PC-9 (cell line): ENCODE measurements at regions of chrX and their contacts with region 1.

Region 1: DNA sequence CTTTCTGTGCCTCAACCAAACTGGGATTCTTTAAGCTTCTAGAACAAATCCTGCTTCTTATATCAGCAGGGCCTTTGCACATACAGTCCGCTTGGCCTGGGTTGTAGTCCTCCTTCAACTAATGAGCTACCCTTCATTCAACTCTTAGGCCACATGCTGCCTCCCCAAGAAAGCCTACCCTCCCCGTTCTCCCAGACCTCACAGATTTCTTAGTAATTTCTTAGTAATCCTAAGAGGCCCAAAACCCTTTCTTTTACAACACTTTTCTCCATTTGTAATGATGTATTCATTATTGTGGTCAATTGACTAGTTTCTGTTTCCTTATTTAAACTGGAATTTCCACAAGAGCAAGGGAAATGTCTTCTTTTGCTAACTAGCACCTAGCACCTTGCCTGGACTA is 233.1 kb downstream of the PPP1R2C start:
- DNase-seq: no peak
- H3K4me3 ChIP-seq: no peak overlapping the region
- H3K27ac ChIP-seq: no peak overlapping the region
- H3K4me1 ChIP-seq: no peaks in the 10 kb centered on the region
- H3K27me3 ChIP-seq: no peaks in the 10 kb centered on the region
- CTCF ChIP-seq: no peak

Region 2: DNA sequence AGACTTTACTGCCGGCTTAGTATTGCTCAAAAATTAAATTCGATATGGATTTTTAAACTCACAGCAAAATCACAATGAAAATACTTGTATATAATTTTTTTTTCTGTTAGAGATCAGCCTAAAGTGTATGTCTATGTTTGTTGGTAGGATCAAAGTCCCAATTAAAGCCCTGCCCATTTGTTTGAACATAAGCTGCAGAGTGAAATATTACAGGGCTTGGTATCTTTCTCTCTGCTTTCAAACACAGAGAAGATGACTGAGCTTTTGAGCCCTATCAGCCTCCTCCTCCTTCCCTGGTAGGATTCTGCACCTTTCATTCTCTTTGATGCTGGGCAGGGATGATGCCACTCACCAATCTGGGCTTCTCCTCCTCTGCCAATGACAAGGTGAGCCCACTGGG is 112.3 kb before region 1 on chrX:
- CTCF ChIA-PET with region 1: no interaction called
- POLR2A ChIA-PET with region 1: interaction called, 11 read pairs
- intact Hi-C with region 1: no loop called
- DNase-seq: no peak
- H3K4me3 ChIP-seq: no peak overlapping the region
- H3K27ac ChIP-seq: no peak overlapping the region
- H3K4me1 ChIP-seq: no peaks in the 10 kb centered on the region
- H3K27me3 ChIP-seq: no peaks in the 10 kb centered on the region
- CTCF ChIP-seq: no peak

Region 3: DNA sequence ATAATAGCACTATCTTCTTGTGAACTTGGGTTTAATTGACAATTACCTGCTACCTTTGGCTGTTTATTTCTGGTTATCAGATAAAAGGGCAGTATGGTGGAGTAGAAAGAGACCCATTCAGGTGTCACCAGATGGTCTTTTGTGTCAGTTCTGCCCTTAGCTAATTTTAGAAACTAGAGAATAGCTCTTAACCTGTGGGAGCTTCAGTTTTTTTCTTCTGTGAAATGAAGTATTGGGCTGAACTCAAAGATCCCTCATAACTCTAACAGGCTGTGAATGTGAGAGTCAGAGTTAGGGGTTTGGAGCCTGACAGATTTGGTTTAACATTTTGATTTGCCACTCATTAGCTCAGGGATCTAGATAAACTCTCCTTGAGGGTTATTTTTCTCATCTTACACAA is 102.1 kb before region 1 on chrX:
- CTCF ChIA-PET with region 1: no interaction called
- POLR2A ChIA-PET with region 1: no interaction called
- intact Hi-C with region 1: no loop called
- DNase-seq: no peak
- H3K4me3 ChIP-seq: no peak overlapping the region
- H3K27ac ChIP-seq: no peak overlapping the region
- H3K4me1 ChIP-seq: no peaks in the 10 kb centered on the region
- H3K27me3 ChIP-seq: no peaks in the 10 kb centered on the region
- CTCF ChIP-seq: no peak

Region 4: GRCh38 chrX:42597481-42597880 is 52.6 kb after region 1 on chrX:
- CTCF ChIA-PET with region 1: no interaction called
- POLR2A ChIA-PET with region 1: no interaction called
- intact Hi-C with region 1: no loop called
- DNase-seq: no peak
- H3K4me3 ChIP-seq: no peak overlapping the region
- H3K27ac ChIP-seq: no peak overlapping the region
- H3K4me1 ChIP-seq: no peaks in the 10 kb centered on the region
- H3K27me3 ChIP-seq: no peaks in the 10 kb centered on the region
- CTCF ChIP-seq: no peak